Activated T-helper 2 cell treated with anti-CD3 and anti-CD28 coated beads, Interferon-gamma antibody, Interleukin-2, Interleukin-4, amounts not matched to agents 10 μg/mL and 5 μg/mL and 100 μg/mL, durations not matched to agents 14 hours and 24 hours and 36 hours (primary cell): ENCODE measurements at regions of chr4 and their contacts with region 1.

Region 1: GRCh38 chr4:185534866-185535611 is at the start of gene PDLIM3:
- DNase-seq: no peak
- H3K4me3 Mint-ChIP-seq: no peak within 1 kb of the TSS
- H3K27ac Mint-ChIP-seq: no peak within 1 kb of the TSS
- H3K4me1 Mint-ChIP-seq: peaks cover 4% of the 10 kb centered on the region
- H3K27me3 Mint-ChIP-seq: peaks cover 41% of the 10 kb centered on the region
- total RNA-seq, gene PDLIM3: 2.5 and 3.2 TPM in 2 replicates

Region 2: GRCh38 chr4:185011408-185011807 is 523.6 kb before region 1 on chr4:
- intact Hi-C with region 1: loop called (anchors 10 kb)
- DNase-seq: no peak
- H3K4me3 Mint-ChIP-seq: no peak overlapping the region
- H3K27ac Mint-ChIP-seq: no peak overlapping the region
- H3K4me1 Mint-ChIP-seq: peaks cover 3% of the 10 kb centered on the region
- H3K27me3 Mint-ChIP-seq: peaks cover 78% of the 10 kb centered on the region

Region 3: GRCh38 chr4:185587427-185588161 is 52.6 kb after region 1 on chr4:
- intact Hi-C with region 1: loop called (anchors 5 kb)
- DNase-seq: peak; percentile 32
- H3K4me3 Mint-ChIP-seq: peak overlapping the region; percentile 45
- H3K27ac Mint-ChIP-seq: peak overlapping the region; percentile 81
- H3K4me1 Mint-ChIP-seq: peaks cover 15% of the 10 kb centered on the region
- H3K27me3 Mint-ChIP-seq: peaks cover 33% of the 10 kb centered on the region